ENCODE measurements at regions of chr7 and their contacts with region 1.

Region 1: GRCh38 chr7:82234457-82235049 is 209.0 kb downstream of the CACNA2D1 start:
- DNase-seq: no peak

Region 2: GRCh38 chr7:82319674-82320118 is 85.1 kb after region 1 on chr7:
- intact Hi-C with region 1: no loop called
- DNase-seq: peak; percentile 89

Region 3: DNA sequence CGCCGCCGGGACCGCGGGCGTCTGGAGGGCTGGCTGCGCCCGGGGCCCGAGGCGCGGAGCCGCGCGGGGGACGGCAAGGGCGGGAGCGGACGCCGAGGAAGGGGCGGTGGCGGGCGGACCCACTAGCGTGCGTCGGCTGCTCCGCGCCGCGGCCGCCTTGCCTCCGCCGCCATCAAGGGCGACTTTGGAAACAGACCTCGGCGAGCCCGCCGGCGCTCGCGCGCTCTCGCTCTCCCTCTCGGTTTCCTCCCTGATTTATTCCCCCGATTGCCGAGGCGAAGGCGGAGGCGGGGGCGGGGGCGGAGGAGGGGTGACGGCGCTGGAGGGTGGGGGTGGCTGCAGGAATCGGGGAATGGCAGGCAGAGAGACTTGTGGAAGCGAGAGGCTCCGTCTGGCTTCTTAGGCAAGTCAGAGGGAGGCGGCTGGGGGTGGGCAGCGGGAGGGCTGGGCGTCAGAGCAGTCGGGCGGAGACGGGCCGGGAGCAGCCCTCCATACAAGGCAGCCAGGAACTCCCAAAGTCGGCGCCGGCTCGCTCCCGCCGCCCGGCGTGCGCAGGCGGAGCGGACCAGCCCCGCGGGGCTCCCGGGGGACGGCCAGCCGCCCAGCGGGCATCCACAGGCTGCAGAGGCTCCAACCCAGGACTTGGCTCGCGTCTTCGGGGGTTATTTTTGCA is 209.1 kb after region 1 on chr7 and contains the start of gene CACNA2D1:
- intact Hi-C with region 1: loop called (anchors 10 kb)
- DNase-seq: peak; percentile 89
- total RNA-seq, gene CACNA2D1: 87.3 TPM

Region 4: DNA sequence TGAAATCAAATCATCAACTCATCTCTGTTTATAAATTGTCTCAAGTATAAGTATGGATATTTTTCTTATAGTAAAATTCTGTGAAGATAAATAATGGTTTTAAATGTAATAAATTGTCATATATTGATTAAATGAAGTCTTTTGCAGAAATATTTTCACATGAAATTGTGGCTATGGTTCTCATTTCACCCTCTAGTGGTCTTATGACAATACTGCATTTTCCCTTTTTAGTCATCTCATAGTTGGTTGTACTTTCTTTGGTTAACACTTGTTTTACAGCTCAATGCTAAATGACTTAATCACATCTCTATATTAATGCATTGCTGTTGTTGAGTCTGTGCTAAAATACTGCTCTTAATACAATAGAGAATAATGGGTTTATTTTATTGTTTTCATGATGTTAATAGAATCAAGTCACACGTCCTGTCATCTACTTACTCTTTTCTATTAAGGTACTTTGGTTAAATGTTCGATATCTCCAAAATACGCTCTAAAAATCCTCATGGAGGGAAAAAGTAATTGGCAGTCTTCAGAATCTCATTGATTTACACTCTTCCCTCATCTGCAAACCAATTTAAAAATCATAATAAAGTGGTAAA is 247.0 kb after region 1 on chr7:
- intact Hi-C with region 1: loop called (anchors 2 kb)
- DNase-seq: no peak

Region 5: DNA sequence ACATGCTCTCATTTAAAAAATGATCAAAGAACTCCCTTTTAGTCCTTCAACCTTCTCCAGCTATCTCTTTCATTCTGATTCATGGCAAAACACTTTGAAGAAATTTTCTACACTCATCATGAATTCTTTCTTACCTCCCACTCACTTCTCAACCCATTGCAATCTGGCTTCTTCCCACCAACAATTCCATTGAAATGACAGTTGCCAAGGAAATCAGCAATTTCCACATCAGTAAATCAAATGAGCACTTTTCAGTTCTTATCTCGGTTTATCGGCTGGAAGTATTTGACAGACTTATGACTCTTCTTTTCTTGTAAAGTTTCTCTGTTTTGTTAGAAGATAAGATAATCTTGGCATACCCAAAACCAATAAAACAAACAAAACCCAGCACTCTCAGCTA is 308.1 kb after region 1 on chr7:
- intact Hi-C with region 1: no loop called
- DNase-seq: no peak